WTC11 (cell line): ENCODE measurements at regions of chr15 and their contacts with region 1.

Region 1: GRCh38 chr15:25693321-25694237 is 169.5 kb downstream of the ATP10A start:
- DNase-seq: peak; percentile 75
- ATAC-seq: peak; percentile 81
- H3K4me3 Mint-ChIP-seq: no peak overlapping the region
- H3K27ac Mint-ChIP-seq: no peak overlapping the region
- H3K4me1 Mint-ChIP-seq: peaks cover 38% of the 10 kb centered on the region
- H3K27me3 Mint-ChIP-seq: no peaks in the 10 kb centered on the region
- CTCF ChIP-seq: peak; percentile 64

Region 2: DNA sequence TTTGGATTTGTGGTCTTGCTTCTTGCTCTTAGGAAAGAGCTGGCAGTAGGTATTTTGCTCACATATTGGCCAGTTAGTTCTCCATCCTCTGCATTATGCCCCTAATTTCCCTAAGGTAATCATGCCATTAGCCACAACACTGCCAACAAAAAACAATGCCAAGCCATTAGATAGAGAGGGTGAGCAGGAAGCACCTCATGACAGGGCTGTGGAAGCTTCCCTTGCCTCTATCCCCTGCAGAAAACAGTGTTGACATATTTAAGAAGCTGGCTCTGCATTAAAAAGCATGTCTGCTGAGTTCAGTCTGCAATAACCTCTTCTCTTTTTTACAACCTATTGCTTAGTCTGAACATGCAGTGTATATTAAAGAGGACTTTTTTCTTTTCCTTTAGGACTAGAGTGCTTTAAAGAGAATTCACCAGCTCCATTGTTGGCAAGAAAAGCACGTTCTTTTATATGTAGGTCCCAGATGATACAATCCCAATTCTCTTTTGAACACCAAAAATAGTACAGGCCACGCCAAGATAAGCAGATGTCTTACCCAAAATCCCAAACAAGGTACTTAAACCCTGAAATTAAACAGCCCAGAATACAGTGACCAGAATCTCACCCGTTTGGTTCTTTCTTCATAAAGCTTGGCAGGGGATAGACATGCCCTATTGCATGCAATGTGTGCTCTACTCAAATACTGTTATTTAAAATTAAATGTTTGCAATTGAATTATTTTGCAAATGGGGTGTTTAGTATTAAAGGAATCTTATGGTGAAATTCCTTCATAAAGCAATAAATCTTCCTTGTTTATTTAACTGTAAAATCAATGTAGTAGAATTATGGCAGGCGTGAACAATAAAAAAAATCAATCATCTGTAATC is 161.1 kb before region 1 on chr15:
- CTCF ChIA-PET with region 1: interaction called, 15 read pairs
- POLR2A ChIA-PET with region 1: no interaction called
- DNase-seq: no peak
- ATAC-seq: no peak
- H3K4me3 Mint-ChIP-seq: no peak overlapping the region
- H3K27ac Mint-ChIP-seq: no peak overlapping the region
- H3K4me1 Mint-ChIP-seq: peaks cover 42% of the 10 kb centered on the region
- H3K27me3 Mint-ChIP-seq: no peaks in the 10 kb centered on the region
- CTCF ChIP-seq: no peak

Region 3: DNA sequence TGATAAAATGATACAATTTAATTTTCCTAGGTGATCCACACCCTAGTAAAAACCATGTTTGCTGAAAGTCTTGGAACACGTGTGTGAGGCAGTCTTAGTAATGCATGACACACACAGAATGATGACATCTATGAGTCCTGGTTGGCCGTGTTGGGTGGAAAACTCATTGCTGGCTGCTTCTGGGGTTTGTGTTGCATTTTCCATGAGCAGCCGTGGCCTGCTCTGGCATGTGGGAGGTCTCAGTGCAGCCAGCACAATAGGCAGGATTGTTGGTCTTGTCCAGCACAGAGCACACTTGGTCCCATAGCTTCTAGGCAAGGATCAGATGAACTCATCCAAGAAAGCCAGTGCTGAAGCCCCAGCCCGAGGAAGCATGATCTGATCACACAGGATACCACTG is 82.0 kb before region 1 on chr15:
- CTCF ChIA-PET with region 1: interaction called, 10 read pairs
- POLR2A ChIA-PET with region 1: no interaction called
- DNase-seq: no peak
- ATAC-seq: no peak
- H3K4me3 Mint-ChIP-seq: no peak overlapping the region
- H3K27ac Mint-ChIP-seq: no peak overlapping the region
- H3K4me1 Mint-ChIP-seq: 0 out of 2 replicates have a peak, but pooled peaks cover 2% of the 10 kb centered on the region
- H3K27me3 Mint-ChIP-seq: peaks cover 3% of the 10 kb centered on the region; the same call in 1 of the 2 replicates
- CTCF ChIP-seq: no peak

Region 4: GRCh38 chr15:25655207-25655948 is 38.2 kb before region 1 on chr15:
- CTCF ChIA-PET with region 1: interaction called, 10 read pairs
- POLR2A ChIA-PET with region 1: no interaction called
- DNase-seq: no peak
- ATAC-seq: peak; percentile 57
- H3K4me3 Mint-ChIP-seq: no peak overlapping the region; the same call in 1 of the 2 replicates
- H3K27ac Mint-ChIP-seq: peak overlapping the region; percentile 67; the same call in 1 of the 2 replicates
- H3K4me1 Mint-ChIP-seq: peaks cover 41% of the 10 kb centered on the region
- H3K27me3 Mint-ChIP-seq: peaks cover 63% of the 10 kb centered on the region
- CTCF ChIP-seq: no peak

Region 5: DNA sequence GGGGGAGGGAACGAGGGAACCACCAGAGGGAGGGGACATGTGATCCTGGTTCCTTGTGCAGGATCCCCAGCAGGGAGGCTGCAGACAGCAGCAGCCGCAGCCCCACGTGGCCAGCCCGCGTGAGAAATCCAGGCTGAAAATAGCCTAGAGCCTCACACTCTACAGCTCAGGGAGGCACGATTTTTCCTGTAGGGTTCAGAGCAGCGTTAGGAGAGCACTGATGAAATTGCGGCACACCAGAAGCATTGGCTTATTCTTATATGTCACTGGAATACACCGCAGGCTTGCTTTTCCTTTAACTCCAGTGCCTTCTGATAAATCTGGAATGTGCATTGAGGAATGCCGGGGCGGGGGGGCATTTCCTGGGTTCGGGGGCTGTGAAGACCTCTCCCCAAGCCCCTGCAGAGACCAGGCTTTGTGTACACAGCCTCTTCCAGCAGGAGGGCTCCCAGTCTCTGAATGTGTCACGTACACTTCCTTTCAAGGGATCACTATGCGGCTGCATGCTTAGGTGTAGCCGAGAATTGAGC is 23.5 kb before region 1 on chr15:
- CTCF ChIA-PET with region 1: interaction called, 11 read pairs
- POLR2A ChIA-PET with region 1: no interaction called
- DNase-seq: peak; percentile 76
- ATAC-seq: peak; percentile 90
- H3K4me3 Mint-ChIP-seq: peak overlapping the region; percentile 55
- H3K27ac Mint-ChIP-seq: peak overlapping the region; percentile 95
- H3K4me1 Mint-ChIP-seq: peaks cover 60% of the 10 kb centered on the region
- H3K27me3 Mint-ChIP-seq: no peaks in the 10 kb centered on the region
- CTCF ChIP-seq: no peak

Region 6: GRCh38 chr15:25710184-25710583 is 16.6 kb after region 1 on chr15:
- CTCF ChIA-PET with region 1: interaction called, 31 read pairs
- POLR2A ChIA-PET with region 1: no interaction called
- DNase-seq: peak; percentile 81
- ATAC-seq: peak; percentile 93
- H3K4me3 Mint-ChIP-seq: no peak overlapping the region
- H3K27ac Mint-ChIP-seq: no peak overlapping the region
- H3K4me1 Mint-ChIP-seq: peaks cover 6% of the 10 kb centered on the region; the same call in 1 of the 2 replicates
- H3K27me3 Mint-ChIP-seq: no peaks in the 10 kb centered on the region
- CTCF ChIP-seq: peak; percentile 52; the same call in 1 of the 2 replicates

Region 7: DNA sequence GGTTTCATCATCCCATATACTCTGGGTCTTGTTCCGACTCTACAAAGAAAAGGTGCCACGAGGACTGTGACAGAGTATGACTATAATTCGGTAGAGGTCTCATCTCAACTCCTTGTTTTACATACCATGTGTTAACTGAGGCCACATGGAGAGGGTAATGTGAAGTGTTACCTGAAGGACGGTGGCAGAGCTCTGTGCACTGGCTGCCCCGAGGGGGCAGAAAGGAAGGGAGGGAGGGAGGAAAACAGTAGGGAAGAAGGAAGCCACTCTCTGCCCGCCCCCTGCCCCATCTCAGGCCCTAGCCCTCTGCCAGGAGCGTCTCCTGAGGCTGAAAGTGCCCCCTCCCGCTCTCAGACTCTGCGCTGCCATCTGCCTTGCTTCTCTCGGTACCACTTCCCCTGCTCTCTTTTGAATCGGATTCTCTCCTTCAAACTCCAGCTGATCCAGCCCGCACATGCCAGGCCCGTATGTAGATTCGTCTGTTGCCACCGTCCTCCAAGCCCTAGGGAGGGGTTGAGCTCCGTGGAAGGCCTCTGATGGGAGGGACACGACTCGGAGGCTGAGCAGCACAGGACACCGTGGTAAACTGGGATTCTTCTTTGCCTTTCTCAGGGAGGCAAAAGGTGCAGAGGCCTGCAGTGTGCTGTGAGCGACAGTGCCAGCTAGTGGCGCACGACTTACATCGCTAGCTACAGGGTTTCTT is 240.0 kb after region 1 on chr15:
- CTCF ChIA-PET with region 1: interaction called, 12 read pairs
- POLR2A ChIA-PET with region 1: no interaction called
- DNase-seq: peak; percentile 73
- ATAC-seq: peak; percentile 95
- H3K4me3 Mint-ChIP-seq: peak overlapping the region; percentile 71
- H3K27ac Mint-ChIP-seq: no peak overlapping the region
- H3K4me1 Mint-ChIP-seq: peaks cover 12% of the 10 kb centered on the region
- H3K27me3 Mint-ChIP-seq: no peaks in the 10 kb centered on the region
- CTCF ChIP-seq: peak; percentile 36; the same call in 1 of the 2 replicates